Caco-2 (cell line): ENCODE measurements at regions of chr1 and their contacts with region 1.

Region 1: DNA sequence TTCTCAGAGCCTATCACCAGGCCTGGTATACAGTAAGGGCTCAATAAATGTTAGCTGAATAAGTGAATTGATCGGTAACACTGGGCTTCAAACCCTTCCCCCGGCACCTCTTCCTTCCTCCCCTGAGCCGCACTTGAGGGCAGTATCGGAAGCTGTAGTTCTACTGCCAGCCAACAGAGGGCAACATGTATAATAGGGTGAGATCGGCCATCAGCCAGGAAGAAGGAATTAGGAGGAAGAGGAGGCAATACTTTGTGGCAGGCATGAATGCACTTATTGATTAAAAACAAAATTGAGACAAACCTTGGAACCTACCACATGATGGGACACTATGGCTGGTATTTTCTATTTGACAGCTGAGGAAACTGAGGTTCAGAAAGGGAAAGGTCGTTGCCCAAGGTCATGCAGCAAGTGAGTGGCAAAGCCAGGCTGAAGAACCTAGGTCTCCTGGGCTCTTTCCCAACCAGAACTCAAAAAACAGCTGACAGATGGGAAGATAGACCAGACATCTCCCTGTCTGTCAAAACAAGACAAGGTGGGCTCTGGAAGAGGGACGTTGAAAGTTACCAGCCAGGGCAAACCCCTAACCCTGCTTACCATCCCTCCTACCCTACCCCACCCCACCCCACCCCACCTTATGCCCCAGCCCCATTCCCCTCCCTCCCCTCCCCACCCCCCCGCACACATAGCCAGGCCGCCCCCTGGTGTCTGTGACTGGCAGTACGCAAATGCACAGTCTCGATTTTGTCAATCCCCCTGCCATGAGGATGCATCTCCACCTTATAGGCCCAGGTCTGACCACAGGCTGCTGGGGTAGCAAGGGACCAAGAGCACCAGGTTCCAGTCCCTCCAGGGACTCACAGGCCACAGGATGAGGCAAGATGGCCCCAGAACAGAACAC is 107.3 kb upstream of the RUNX3 start:
- DNase-seq: peak in 1 of 2 experiments; percentile 40
- H3K4me3 ChIP-seq: no peak overlapping the region
- H3K4me3 Mint-ChIP-seq: no peak overlapping the region
- H3K27ac Mint-ChIP-seq: no peak overlapping the region
- H3K4me1 ChIP-seq: no peaks in the 10 kb centered on the region
- H3K4me1 Mint-ChIP-seq: no peaks in the 10 kb centered on the region
- H3K27me3 ChIP-seq: no peaks in the 10 kb centered on the region
- H3K27me3 Mint-ChIP-seq: no peaks in the 10 kb centered on the region
- CTCF ChIP-seq: peak in 1 of 2 experiments; percentile 36

Region 2: DNA sequence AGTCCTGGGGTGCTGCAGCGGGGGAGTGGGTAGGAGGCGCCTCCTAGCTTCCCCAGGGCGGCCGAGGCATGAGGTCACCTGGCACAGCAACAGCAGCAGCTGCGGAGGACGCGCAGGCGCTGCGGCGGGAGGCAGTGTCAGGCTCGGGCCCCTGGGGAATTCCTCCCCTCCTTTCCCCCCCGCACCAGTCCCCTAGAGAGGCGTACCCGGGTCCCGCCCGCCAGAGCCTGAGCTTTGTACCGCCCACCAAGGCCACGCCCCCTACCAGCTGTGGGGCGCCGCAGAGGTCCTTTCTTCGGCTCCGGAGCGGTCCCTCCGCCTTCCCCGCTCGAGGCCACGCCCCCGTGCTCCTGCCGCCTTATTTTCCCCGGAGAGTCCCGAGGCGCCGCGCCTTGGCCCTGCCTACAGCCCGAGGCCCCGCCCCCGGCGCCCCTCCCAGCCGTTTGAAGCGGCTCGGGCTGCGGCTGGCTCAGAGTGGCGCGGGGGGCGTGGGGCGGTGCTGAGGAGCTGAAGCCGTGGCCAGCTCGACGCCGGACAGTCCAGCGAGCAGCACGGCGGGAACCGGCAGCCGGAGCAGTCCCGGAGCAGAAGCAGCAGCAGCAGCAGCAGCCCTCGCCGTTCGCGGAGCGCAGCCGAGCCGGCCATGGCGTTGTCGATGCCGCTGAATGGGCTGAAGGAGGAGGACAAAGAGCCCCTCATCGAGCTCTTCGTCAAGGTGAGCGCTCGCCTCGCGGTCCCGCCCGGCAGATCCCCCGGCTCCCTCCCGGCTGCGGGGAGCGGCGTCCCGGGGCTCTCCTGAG is 292.3 kb before region 1 on chr1 and contains the start of gene CLIC4:
- CTCF ChIA-PET with region 1: no interaction called
- POLR2A ChIA-PET with region 1: no interaction called
- intact Hi-C with region 1: no loop called
- DNase-seq: peak; percentile 99
- H3K4me3 ChIP-seq: peak within 1 kb of the TSS; percentile 66
- H3K4me3 Mint-ChIP-seq: peak within 1 kb of the TSS; percentile 84
- H3K27ac Mint-ChIP-seq: peak within 1 kb of the TSS; percentile 83
- H3K4me1 ChIP-seq: peaks cover 21% of the 10 kb centered on the region
- H3K4me1 Mint-ChIP-seq: peaks cover 23% of the 10 kb centered on the region
- H3K27me3 ChIP-seq: no peaks in the 10 kb centered on the region
- H3K27me3 Mint-ChIP-seq: no peaks in the 10 kb centered on the region
- CTCF ChIP-seq: peak in 1 of 2 experiments; percentile 21
- total RNA-seq, gene CLIC4: 125 and 140 TPM in 2 replicates

Region 3: DNA sequence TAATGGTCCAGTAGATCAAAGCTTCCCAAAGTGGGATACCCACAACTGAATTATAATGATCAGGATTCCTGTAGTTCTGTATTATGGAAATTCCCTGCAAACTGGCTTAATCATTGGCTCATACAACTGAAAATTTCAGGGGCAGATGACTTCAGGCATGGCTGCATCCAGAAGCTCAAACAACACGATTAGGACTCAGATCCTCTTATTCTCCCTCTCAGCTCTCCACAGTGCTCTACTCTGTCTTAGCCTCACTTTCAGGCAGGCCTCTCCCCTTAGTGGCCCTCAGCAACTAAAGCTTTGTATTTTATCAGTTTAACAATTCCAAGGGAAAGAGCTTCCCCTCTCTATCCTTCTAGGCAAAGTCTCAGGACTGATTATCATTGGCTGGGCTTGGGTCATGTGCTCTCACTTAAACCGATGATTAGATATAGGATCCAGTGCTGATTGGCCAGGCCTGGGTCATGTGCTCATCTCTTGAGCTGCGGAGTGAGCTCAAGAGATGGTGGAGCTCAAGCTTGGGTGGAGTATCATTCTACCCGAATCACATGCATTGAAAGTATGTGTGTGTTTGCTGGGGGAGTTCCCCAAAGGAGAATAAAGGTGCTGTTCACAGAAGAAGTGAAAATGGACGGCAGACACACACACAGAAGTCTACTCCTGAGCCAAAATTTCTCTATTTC is 49.4 kb before region 1 on chr1:
- CTCF ChIA-PET with region 1: no interaction called
- POLR2A ChIA-PET with region 1: no interaction called
- intact Hi-C with region 1: no loop called
- DNase-seq: no peak
- H3K4me3 ChIP-seq: no peak overlapping the region
- H3K4me3 Mint-ChIP-seq: no peak overlapping the region
- H3K27ac Mint-ChIP-seq: no peak overlapping the region
- H3K4me1 ChIP-seq: no peaks in the 10 kb centered on the region
- H3K4me1 Mint-ChIP-seq: no peaks in the 10 kb centered on the region
- H3K27me3 ChIP-seq: no peaks in the 10 kb centered on the region
- H3K27me3 Mint-ChIP-seq: peaks cover 11% of the 10 kb centered on the region
- CTCF ChIP-seq: no peak

Region 4: DNA sequence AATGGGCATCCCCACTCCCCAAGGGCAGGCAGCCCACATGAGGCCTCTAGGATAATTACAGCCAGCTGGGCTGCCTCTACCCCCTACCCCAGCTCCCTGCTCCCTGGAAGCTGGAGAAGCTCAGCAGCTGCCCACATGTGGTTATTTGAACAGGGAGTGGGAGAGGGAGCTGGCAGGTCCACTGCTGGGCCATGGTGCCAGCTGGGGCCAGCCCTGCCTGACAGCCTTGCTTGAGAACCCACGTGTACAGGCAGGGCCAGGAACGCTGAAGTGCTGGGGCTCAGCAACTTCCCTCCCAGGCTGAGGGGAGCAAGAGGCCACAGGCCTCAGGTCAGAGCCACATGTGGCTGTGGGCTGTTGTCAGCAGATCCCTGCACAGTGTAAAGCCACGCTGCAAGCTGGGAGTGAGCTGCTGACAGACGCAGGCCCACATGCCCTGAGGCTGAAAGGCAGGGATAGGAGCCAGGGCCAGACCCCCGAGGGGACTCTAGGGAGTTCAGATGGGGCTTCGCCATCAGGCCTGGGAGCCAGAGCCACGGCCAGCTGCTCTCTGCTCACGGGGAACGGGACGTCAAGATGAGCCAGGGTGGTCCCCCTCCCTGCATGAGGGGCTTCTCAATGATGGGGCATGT is 65.9 kb after region 1 on chr1:
- CTCF ChIA-PET with region 1: no interaction called
- POLR2A ChIA-PET with region 1: no interaction called
- intact Hi-C with region 1: loop called (anchors 5 kb)
- DNase-seq: no peak
- H3K4me3 ChIP-seq: no peak overlapping the region
- H3K4me3 Mint-ChIP-seq: no peak overlapping the region
- H3K27ac Mint-ChIP-seq: no peak overlapping the region
- H3K4me1 ChIP-seq: no peaks in the 10 kb centered on the region
- H3K4me1 Mint-ChIP-seq: no peaks in the 10 kb centered on the region
- H3K27me3 ChIP-seq: no peaks in the 10 kb centered on the region
- H3K27me3 Mint-ChIP-seq: no peaks in the 10 kb centered on the region
- CTCF ChIP-seq: no peak

Region 5: GRCh38 chr1:25167331-25168199 is 130.1 kb after region 1 on chr1:
- CTCF ChIA-PET with region 1: no interaction called
- POLR2A ChIA-PET with region 1: no interaction called
- intact Hi-C with region 1: no loop called
- DNase-seq: peak; percentile 29 to 56
- H3K4me3 ChIP-seq: no peak overlapping the region
- H3K4me3 Mint-ChIP-seq: peak overlapping the region; percentile 57
- H3K27ac Mint-ChIP-seq: peak overlapping the region; percentile 82
- H3K4me1 ChIP-seq: peaks cover 29% of the 10 kb centered on the region
- H3K4me1 Mint-ChIP-seq: peaks cover 32% of the 10 kb centered on the region
- H3K27me3 ChIP-seq: no peaks in the 10 kb centered on the region
- H3K27me3 Mint-ChIP-seq: no peaks in the 10 kb centered on the region
- CTCF ChIP-seq: no peak

Region 6: DNA sequence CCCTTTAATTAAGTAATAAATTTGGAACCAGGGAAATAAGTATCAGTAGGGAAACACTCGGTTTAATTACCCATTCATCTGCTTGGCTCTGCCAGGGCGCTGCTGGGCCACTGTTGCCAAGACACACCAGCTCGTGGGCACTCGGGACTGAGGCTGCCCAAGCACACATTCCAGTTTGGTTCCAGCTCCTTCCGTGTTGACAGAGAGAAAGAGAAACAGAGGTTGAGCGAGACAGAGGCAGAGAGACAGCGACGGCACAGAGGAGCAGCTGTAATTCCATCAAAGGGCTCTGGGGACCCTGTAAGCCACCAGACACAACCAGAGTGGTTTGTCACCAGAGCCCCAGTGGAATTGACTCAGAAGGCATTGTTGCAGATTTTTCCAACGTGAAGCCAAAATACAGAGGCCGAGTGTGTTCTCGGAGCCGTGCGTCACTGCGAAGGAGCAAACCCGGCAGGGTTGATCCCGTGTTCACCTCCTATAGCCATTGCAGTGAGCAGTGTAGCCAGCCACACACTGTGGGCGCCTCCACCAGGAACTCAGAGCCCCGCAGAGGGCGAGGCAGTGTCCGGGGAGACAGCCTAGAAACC is 161.3 kb after region 1 on chr1:
- CTCF ChIA-PET with region 1: no interaction called
- POLR2A ChIA-PET with region 1: no interaction called
- intact Hi-C with region 1: loop called (anchors 10 kb)
- DNase-seq: no peak
- H3K4me3 ChIP-seq: no peak overlapping the region
- H3K4me3 Mint-ChIP-seq: no peak overlapping the region
- H3K27ac Mint-ChIP-seq: peak overlapping the region; percentile 66
- H3K4me1 ChIP-seq: peaks cover 10% of the 10 kb centered on the region
- H3K4me1 Mint-ChIP-seq: peaks cover 30% of the 10 kb centered on the region
- H3K27me3 ChIP-seq: no peaks in the 10 kb centered on the region
- H3K27me3 Mint-ChIP-seq: no peaks in the 10 kb centered on the region
- CTCF ChIP-seq: peak in 1 of 2 experiments; percentile 9